ENCODE measurements at regions of chr18 and their contacts with region 1.

Region 1: GRCh38 chr18:45879681-45880655 is 54.5 kb downstream of the SIGLEC15 start:
- DNase-seq: peak; percentile 70 to 84
- ATAC-seq: peak; percentile 91 to 96 (median 95)
- H3K4me3 ChIP-seq: no peak overlapping the region
- H3K4me3 Mint-ChIP-seq: no peak overlapping the region
- H3K27ac ChIP-seq: no peak overlapping the region
- H3K27ac Mint-ChIP-seq: peak overlapping the region; percentile 72 to 79
- H3K4me1 ChIP-seq: peaks cover 12% of the 10 kb centered on the region
- H3K4me1 Mint-ChIP-seq: peaks cover 21 to 23% of the 10 kb centered on the region in 2 donors
- H3K27me3 ChIP-seq: no peaks in the 10 kb centered on the region
- H3K27me3 Mint-ChIP-seq: no peaks in the 10 kb centered on the region
- CTCF ChIP-seq: peak; percentile 99

Region 2: GRCh38 chr18:45621061-45621511 is 258.9 kb before region 1 on chr18:
- intact Hi-C with region 1: loop called (anchors 5 kb)
- DNase-seq: peak; percentile 18 to 69
- ATAC-seq: peak; percentile 61 to 84 (median 76)
- H3K4me3 ChIP-seq: no peak overlapping the region
- H3K4me3 Mint-ChIP-seq: no peak overlapping the region
- H3K27ac ChIP-seq: no peak overlapping the region
- H3K27ac Mint-ChIP-seq: no peak overlapping the region
- H3K4me1 ChIP-seq: no peaks in the 10 kb centered on the region
- H3K4me1 Mint-ChIP-seq: peaks cover 0 to 6% of the 10 kb centered on the region in 2 donors
- H3K27me3 ChIP-seq: no peaks in the 10 kb centered on the region
- H3K27me3 Mint-ChIP-seq: peaks cover 17 to 23% of the 10 kb centered on the region in 2 donors
- CTCF ChIP-seq: peak; percentile 94

Region 3: GRCh38 chr18:45722899-45723298 is 157.1 kb before region 1 on chr18:
- intact Hi-C with region 1: loop called (anchors 1 kb)
- DNase-seq: peak; percentile 60 to 69
- ATAC-seq: peak; percentile 81 to 99 (median 99)
- H3K4me3 ChIP-seq: no peak overlapping the region
- H3K4me3 Mint-ChIP-seq: no peak overlapping the region
- H3K27ac ChIP-seq: no peak overlapping the region
- H3K27ac Mint-ChIP-seq: no peak overlapping the region
- H3K4me1 ChIP-seq: no peaks in the 10 kb centered on the region
- H3K4me1 Mint-ChIP-seq: no peaks in the 10 kb centered on the region
- H3K27me3 ChIP-seq: no peaks in the 10 kb centered on the region
- H3K27me3 Mint-ChIP-seq: no peaks in the 10 kb centered on the region
- CTCF ChIP-seq: peak; percentile 70

Region 4: GRCh38 chr18:45774065-45774521 is 105.9 kb before region 1 on chr18:
- intact Hi-C with region 1: loop called (anchors 5 kb)
- DNase-seq: peak in 1 of 2 donors; percentile 35
- ATAC-seq: peak; percentile 40 to 67 (median 53)
- H3K4me3 ChIP-seq: no peak overlapping the region
- H3K4me3 Mint-ChIP-seq: peak overlapping the region; percentile 76
- H3K27ac ChIP-seq: no peak overlapping the region
- H3K27ac Mint-ChIP-seq: peak overlapping the region; percentile 39 to 78
- H3K4me1 ChIP-seq: peaks cover 43% of the 10 kb centered on the region
- H3K4me1 Mint-ChIP-seq: peaks cover 44 to 65% of the 10 kb centered on the region in 2 donors
- H3K27me3 ChIP-seq: no peaks in the 10 kb centered on the region
- H3K27me3 Mint-ChIP-seq: peaks cover 16 to 23% of the 10 kb centered on the region in 2 donors
- CTCF ChIP-seq: no peak